ENCODE measurements at regions of chr2 and their contacts with region 1.

Region 1: DNA sequence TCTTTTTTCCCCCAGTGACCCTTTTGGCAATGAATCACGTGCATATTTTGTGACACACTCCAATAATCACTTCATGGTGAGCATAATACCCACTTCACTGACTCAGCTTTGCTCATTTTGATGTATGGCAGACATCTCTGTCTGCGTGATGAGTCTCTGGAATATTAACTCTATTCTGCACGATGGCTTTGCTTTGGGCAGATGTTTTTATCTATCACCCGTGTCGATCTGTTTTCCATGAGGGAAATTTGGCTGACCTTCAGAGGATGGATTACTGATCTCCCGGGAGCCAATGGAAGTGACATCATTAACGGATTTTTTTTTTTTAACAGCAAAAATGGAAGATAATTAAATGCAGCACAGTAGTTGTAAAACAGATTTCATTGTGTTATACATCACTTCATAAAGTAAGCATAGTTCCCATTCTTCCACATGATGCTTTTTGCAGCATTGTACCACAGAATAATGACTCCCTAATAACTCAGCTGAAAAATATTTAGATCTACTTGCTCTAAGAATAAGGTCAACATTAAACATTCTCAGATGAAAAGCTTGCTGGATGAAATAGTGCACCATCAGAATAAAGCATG is 29.8 kb downstream of the CDC42EP3 start:
- DNase-seq: no peak
- ATAC-seq: no peak
- H3K4me3 ChIP-seq: no peak overlapping the region
- H3K4me3 Mint-ChIP-seq: peak overlapping the region; percentile 16
- H3K27ac ChIP-seq: peak overlapping the region in 1 of 2 donors; percentile 20
- H3K27ac Mint-ChIP-seq: peak overlapping the region; percentile 79
- H3K4me1 ChIP-seq: peaks cover 46% of the 10 kb centered on the region
- H3K4me1 Mint-ChIP-seq: peaks cover 83% of the 10 kb centered on the region
- H3K27me3 ChIP-seq: no peaks in the 10 kb centered on the region
- H3K27me3 Mint-ChIP-seq: no peaks in the 10 kb centered on the region
- CTCF ChIP-seq: no peak

Region 2: DNA sequence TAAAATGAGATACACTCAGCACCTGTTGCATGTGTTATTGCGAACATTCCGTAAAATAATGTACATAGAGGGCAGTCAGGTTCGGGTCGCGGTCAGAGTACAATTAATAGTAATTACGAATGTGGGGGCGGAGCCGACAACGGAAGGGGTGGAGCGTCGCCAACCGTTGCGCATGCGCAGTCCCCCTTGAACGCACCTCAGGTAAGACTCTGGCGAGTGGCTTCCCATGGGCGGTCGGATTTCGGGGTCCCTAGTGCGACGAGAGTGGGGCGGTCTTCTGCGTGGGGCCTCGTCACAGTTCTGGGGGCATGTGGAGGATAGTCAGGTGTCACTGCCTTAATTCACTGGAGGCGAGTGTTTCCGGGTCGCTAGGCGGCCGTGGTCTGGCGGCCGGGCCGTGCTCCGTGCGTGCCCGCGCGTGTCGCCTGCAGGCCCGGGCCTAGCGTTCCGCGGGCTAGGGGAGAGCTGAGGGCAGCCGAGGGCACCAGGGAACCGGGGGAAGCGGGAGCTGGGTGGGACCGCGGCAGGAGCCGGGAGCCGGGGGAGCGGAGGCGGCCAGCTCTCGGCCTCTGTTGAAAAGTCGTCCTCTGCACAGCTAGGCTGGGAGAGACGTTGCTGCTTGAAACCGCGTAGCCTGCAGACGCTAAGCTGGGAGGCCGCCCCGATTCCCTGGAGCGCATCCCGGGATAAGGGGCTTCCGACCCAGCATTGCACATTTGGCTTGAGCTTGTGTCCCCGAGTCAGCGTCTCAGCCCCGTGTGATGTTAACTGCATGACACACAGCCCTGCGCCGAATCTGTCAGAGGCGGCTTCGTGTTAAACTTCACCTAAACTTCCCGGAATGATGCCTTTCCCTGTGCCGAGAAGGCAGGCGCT is 445.1 kb before region 1 on chr2 and contains the start of gene CEBPZOS:
- CTCF ChIA-PET with region 1: no interaction called
- POLR2A ChIA-PET with region 1: no interaction called
- intact Hi-C with region 1: no loop called
- DNase-seq: peak; percentile 81 to 94 (median 90)
- ATAC-seq: peak; percentile 87
- H3K4me3 ChIP-seq: peak within 1 kb of the TSS; percentile 87
- H3K4me3 Mint-ChIP-seq: peak within 1 kb of the TSS; percentile 99
- H3K27ac ChIP-seq: peak within 1 kb of the TSS; percentile 70 to 82
- H3K27ac Mint-ChIP-seq: peak within 1 kb of the TSS; percentile 95
- H3K4me1 ChIP-seq: peaks cover 34% of the 10 kb centered on the region
- H3K4me1 Mint-ChIP-seq: peaks cover 35% of the 10 kb centered on the region
- H3K27me3 ChIP-seq: no peaks in the 10 kb centered on the region
- H3K27me3 Mint-ChIP-seq: no peaks in the 10 kb centered on the region
- CTCF ChIP-seq: no peak
- total RNA-seq, gene CEBPZOS: 23.4 to 24.6 TPM

Region 3: GRCh38 chr2:37543999-37544557 is 97.6 kb before region 1 on chr2:
- CTCF ChIA-PET with region 1: no interaction called
- POLR2A ChIA-PET with region 1: no interaction called
- intact Hi-C with region 1: loop called in 1 of 2 experiments (anchors 5 kb)
- DNase-seq: no peak
- ATAC-seq: no peak
- H3K4me3 ChIP-seq: no peak overlapping the region
- H3K4me3 Mint-ChIP-seq: no peak overlapping the region
- H3K27ac ChIP-seq: no peak overlapping the region
- H3K27ac Mint-ChIP-seq: no peak overlapping the region
- H3K4me1 ChIP-seq: peaks cover 4% of the 10 kb centered on the region
- H3K4me1 Mint-ChIP-seq: no peaks in the 10 kb centered on the region
- H3K27me3 ChIP-seq: no peaks in the 10 kb centered on the region
- H3K27me3 Mint-ChIP-seq: no peaks in the 10 kb centered on the region
- CTCF ChIP-seq: no peak

Region 4: GRCh38 chr2:37786854-37787253 is 145.2 kb after region 1 on chr2:
- CTCF ChIA-PET with region 1: no interaction called
- POLR2A ChIA-PET with region 1: no interaction called
- intact Hi-C with region 1: no loop called
- DNase-seq: no peak
- ATAC-seq: no peak
- H3K4me3 ChIP-seq: no peak overlapping the region
- H3K4me3 Mint-ChIP-seq: no peak overlapping the region
- H3K27ac ChIP-seq: no peak overlapping the region
- H3K27ac Mint-ChIP-seq: no peak overlapping the region
- H3K4me1 ChIP-seq: no peaks in the 10 kb centered on the region
- H3K4me1 Mint-ChIP-seq: no peaks in the 10 kb centered on the region
- H3K27me3 ChIP-seq: no peaks in the 10 kb centered on the region
- H3K27me3 Mint-ChIP-seq: no peaks in the 10 kb centered on the region
- CTCF ChIP-seq: no peak

Measured in CD4-positive, alpha-beta T cell (primary cell).